H1 (cell line): ENCODE measurements at regions of chr1 and their contacts with region 1.

Region 1: GRCh38 chr1:15128520-15129313 is 24.8 kb upstream of the TMEM51 start:
- DNase-seq: peak; percentile 56 to 94
- H3K4me3 ChIP-seq: no peak overlapping the region
- H3K27ac ChIP-seq: no peak overlapping the region
- H3K4me1 ChIP-seq: no peaks in the 10 kb centered on the region
- H3K27me3 ChIP-seq: no peaks in the 10 kb centered on the region
- CTCF ChIP-seq: peak; percentile 92 to 96 (median 94)
- EP300 ChIP-seq: no peak
- POLR2A ChIP-seq: no peak
- RAD21 ChIP-seq: peak; percentile 91 to 92

Region 2: DNA sequence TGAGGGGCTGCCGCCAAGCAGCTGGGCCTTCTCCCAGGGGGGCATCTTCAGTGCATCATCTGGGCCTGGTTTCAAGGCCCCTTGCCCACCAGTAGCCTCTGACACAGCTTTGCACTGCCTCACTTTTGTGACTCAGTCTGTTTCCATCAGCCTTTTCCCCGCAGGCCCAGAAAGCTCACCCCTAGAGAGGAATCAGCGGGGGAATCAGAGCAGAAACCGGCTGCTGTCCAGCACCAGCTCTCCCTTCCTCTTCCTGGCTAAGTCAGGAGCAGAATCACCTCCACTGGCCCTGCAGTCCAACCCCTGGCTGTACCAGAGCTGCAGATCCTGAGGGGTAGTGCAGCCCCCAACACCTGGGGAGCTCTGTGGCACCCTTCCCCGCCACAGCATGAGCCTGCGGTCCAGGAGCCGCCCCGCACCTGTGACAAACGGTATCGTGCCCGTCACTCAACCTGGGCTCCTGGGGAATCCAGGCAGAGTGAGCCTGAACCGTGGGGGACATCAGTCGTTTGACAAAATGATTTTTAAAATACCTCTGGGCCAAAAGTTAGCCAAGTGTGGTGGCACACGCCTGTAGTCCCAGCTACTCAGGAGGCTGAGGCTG is 58.5 kb before region 1 on chr1:
- CTCF ChIA-PET with region 1: no interaction called
- POLR2A ChIA-PET with region 1: no interaction called
- DNase-seq: no peak
- H3K4me3 ChIP-seq: no peak overlapping the region
- H3K27ac ChIP-seq: no peak overlapping the region
- H3K4me1 ChIP-seq: no peaks in the 10 kb centered on the region
- H3K27me3 ChIP-seq: no peaks in the 10 kb centered on the region
- CTCF ChIP-seq: no peak
- EP300 ChIP-seq: no peak
- POLR2A ChIP-seq: no peak
- RAD21 ChIP-seq: no peak

Region 3: DNA sequence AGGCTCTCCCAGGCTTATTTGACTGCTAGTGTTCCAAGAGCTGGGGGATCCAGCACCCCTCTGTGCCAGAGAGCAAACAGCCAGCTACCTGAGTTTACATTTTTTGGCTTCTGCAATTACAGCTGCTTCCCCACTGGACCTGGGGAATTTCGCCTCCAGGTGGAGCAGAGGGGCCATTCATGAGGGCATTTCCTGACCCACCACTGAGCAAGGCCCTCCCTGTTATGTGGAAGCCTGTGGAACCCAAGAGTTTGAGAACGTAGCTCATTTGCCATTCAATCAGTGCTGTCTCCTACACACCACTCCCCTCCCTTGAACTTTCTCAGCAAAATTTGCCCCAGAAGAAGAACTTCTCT is 17.9 kb before region 1 on chr1:
- CTCF ChIA-PET with region 1: interaction called, 24 read pairs
- POLR2A ChIA-PET with region 1: no interaction called
- DNase-seq: no peak
- H3K4me3 ChIP-seq: no peak overlapping the region
- H3K27ac ChIP-seq: no peak overlapping the region
- H3K4me1 ChIP-seq: peaks cover 14 to 32% (median 16%) of the 10 kb centered on the region in 4 experiments
- H3K27me3 ChIP-seq: no peaks in the 10 kb centered on the region; a peak in 1 of 7 replicates
- CTCF ChIP-seq: peak; percentile 56 to 63 (median 60)
- EP300 ChIP-seq: no peak
- POLR2A ChIP-seq: no peak
- RAD21 ChIP-seq: peak; percentile 48 to 69

Region 4: DNA sequence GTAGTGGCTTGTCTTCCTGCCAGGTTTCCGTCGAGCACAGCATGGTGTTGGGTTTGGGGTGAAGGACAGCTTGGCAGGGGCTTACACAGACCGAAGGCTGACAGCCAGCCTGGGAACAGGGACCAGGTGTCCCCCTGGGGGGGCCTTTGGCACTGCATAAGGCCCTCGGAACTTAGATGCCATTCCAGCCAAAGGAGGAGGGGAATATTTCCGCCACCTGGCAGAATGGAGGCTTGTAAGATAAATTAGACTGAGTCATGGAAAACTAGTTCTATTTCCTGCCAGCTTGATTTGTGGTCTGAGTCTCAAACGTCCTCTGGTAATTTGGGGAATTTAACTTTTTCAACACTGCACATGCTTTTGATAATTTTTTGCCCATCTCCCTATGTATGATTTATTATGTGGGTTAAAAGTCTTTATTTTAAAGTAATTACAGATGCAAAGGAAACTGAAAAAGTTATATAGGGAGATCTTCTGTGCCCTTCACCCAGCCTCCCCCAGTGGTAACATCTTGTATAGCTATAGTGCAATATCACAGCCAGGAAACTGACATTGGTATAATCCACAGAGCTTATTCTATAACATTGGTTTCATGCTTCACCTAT is 13.3 kb after region 1 on chr1:
- CTCF ChIA-PET with region 1: interaction called, 25 read pairs
- POLR2A ChIA-PET with region 1: no interaction called
- DNase-seq: no peak
- H3K4me3 ChIP-seq: no peak overlapping the region
- H3K27ac ChIP-seq: no peak overlapping the region
- H3K4me1 ChIP-seq: peaks cover 0 to 11% (median 6%) of the 10 kb centered on the region in 4 experiments; a peak in 5 of 7 replicates
- H3K27me3 ChIP-seq: 0 out of 7 replicates have a peak, but pooled peaks cover 0 to 4% (median 0%) of the 10 kb centered on the region in 4 experiments
- CTCF ChIP-seq: no peak
- EP300 ChIP-seq: no peak
- POLR2A ChIP-seq: no peak
- RAD21 ChIP-seq: no peak

Region 5: GRCh38 chr1:15152318-15153183 is 23.8 kb after region 1 on chr1:
- CTCF ChIA-PET with region 1: interaction called, 20 read pairs
- POLR2A ChIA-PET with region 1: interaction called, 4 read pairs
- DNase-seq: peak in 1 of 2 experiments; percentile 83
- H3K4me3 ChIP-seq: peak overlapping the region; percentile 59 to 84 (median 74)
- H3K27ac ChIP-seq: no peak overlapping the region
- H3K4me1 ChIP-seq: peaks cover 3 to 15% (median 8%) of the 10 kb centered on the region in 4 experiments
- H3K27me3 ChIP-seq: peaks cover 0 to 23% (median 10%) of the 10 kb centered on the region in 4 experiments; a peak in 6 of 7 replicates
- CTCF ChIP-seq: peak; percentile 62 to 69 (median 65)
- EP300 ChIP-seq: no peak
- POLR2A ChIP-seq: no peak; a peak in 1 of 3 replicates
- RAD21 ChIP-seq: peak; percentile 68 to 82

Region 6: DNA sequence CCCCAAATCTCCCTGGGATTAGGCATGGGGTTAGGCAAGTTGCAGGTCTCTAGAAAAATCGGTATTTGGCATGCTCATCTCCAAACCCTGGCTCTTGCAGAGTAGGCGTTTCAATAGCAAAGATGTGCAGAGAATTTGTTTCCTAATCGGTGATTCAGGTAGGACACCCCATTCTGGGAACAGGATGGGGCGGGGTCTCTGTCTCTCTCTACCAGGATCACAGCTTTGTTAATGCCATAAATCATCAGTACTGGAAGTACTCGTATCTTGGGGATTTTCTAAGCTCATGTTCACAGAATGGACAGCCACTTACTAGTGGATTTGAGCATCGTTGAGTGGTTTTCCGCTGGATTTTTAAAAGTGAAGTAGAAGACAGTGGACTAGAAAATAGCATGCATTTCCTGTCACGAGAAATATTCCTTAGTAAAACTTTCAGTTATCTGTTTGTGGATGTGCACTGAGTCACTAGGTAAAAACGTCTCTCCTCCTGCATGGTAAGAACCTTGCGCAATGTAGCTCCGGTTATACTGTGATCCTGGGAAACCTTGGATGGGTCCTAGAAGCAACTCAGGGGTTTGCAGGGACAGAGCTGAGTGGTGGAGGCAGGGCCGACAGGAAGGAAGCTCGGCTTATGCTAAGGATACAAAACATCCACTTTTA is 29.9 kb after region 1 on chr1:
- CTCF ChIA-PET with region 1: interaction called, 20 read pairs
- POLR2A ChIA-PET with region 1: interaction called, 4 read pairs
- DNase-seq: no peak
- H3K4me3 ChIP-seq: no peak overlapping the region
- H3K27ac ChIP-seq: no peak overlapping the region
- H3K4me1 ChIP-seq: peaks cover 3 to 15% (median 9%) of the 10 kb centered on the region in 4 experiments; a peak in 6 of 7 replicates
- H3K27me3 ChIP-seq: peaks cover 0 to 5% (median 3%) of the 10 kb centered on the region in 4 experiments; a peak in 4 of 7 replicates
- CTCF ChIP-seq: no peak
- EP300 ChIP-seq: no peak
- POLR2A ChIP-seq: no peak
- RAD21 ChIP-seq: no peak

Region 7: DNA sequence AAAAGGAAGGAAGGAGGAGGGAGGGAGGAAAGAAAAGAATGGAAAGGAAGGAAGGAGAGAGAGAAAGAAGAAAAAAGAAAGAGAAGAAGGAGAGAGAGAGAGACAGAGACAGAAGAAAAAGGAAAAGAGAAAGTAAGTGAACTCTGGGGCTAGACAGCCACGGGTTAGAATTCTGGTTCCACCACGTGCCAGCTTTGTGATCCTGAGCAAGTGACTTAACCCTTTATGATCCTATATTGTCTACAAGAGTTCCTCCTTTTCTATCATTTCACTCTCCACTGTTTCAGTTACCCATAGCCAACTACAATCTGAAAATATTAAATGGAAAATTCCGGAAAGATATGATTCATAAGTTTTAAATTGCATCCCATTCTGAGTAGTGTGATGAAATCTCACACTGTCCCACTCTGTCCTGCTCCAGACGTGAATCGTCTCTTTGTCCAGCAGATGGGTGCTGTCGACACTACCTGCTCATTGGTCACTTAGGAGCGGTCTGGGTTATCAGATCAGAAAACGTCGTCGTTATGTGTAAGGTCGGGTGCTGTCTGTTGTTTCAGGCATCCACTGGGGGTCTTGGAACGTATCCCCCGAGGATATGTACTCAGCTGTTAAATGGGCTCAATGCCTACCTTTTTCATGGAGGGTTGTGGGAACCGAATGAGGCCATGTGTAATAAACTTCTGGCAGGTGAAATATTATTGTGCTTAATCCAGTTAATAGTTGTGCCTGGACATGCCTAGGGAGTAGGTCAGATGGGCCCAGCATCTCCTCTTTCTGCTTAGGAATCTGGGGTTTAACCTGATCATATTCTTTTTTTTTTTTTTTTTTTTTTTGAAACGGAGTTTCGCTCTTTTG is 43.9 kb after region 1 on chr1:
- CTCF ChIA-PET with region 1: no interaction called
- POLR2A ChIA-PET with region 1: no interaction called
- DNase-seq: no peak
- H3K4me3 ChIP-seq: no peak overlapping the region
- H3K27ac ChIP-seq: no peak overlapping the region
- H3K4me1 ChIP-seq: peaks cover 0 to 7% (median 0%) of the 10 kb centered on the region in 4 experiments; a peak in 4 of 7 replicates
- H3K27me3 ChIP-seq: no peaks in the 10 kb centered on the region
- CTCF ChIP-seq: no peak
- EP300 ChIP-seq: no peak
- POLR2A ChIP-seq: no peak
- RAD21 ChIP-seq: no peak

Region 8: DNA sequence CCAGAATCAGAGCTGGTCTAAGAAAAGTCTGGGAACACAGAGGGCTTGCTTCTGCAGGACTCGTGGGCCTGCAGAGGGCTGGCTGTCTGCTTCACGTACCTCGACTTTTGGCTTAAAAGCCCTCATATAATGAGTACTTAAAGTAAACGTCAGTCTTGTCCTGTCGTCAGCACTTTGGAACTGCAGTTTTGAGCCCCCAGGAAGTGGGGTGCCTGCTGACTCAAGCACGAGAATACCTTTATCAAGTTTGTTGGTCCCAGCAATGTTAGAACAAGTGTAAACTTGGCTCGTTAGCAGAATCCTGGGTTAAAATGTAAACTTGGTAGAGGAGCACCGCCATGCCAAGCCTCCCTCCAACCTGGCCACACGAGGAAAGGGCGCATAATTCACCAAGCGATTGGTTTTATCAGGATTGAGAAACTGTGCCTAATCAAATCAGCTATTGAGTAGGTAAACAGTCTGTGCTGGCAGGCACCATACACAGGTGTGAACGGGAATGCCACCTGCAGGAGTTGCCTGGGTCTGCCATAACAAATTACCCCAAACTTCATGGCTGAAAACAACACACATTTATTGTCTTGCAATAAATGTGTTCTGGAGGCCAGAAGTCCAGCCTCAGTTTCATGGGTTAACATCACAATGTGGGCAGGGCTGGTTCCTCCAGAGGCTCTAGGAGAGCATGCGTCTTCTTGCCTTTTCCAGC is 73.3 kb after region 1 on chr1:
- CTCF ChIA-PET with region 1: interaction called, 10 read pairs
- POLR2A ChIA-PET with region 1: no interaction called
- DNase-seq: no peak
- H3K4me3 ChIP-seq: no peak overlapping the region
- H3K27ac ChIP-seq: no peak overlapping the region
- H3K4me1 ChIP-seq: peaks cover 17 to 32% (median 26%) of the 10 kb centered on the region in 4 experiments
- H3K27me3 ChIP-seq: no peaks in the 10 kb centered on the region
- CTCF ChIP-seq: no peak
- EP300 ChIP-seq: no peak
- POLR2A ChIP-seq: no peak
- RAD21 ChIP-seq: no peak

Region 9: GRCh38 chr1:15304701-15305467 is 176.2 kb after region 1 on chr1:
- CTCF ChIA-PET with region 1: interaction called, 26 read pairs
- POLR2A ChIA-PET with region 1: no interaction called
- DNase-seq: peak; percentile 17 to 89
- H3K4me3 ChIP-seq: no peak overlapping the region
- H3K27ac ChIP-seq: no peak overlapping the region
- H3K4me1 ChIP-seq: no peaks in the 10 kb centered on the region
- H3K27me3 ChIP-seq: no peaks in the 10 kb centered on the region; a peak in 1 of 7 replicates
- CTCF ChIP-seq: peak; percentile 72 to 86 (median 81)
- EP300 ChIP-seq: no peak
- POLR2A ChIP-seq: no peak
- RAD21 ChIP-seq: peak; percentile 86 to 87